ENCODE measurements at regions of chr21 and their contacts with region 1.

Region 1: GRCh38 chr21:39640754-39641153 is 28.0 kb downstream of the B3GALT5 start:
- DNase-seq: no peak
- ATAC-seq: no peak
- H3K4me3 ChIP-seq: no peak overlapping the region
- H3K27ac ChIP-seq: no peak overlapping the region
- H3K4me1 ChIP-seq: peaks cover 18% of the 10 kb centered on the region
- H3K27me3 ChIP-seq: no peaks in the 10 kb centered on the region
- CTCF ChIP-seq: no peak

Region 2: GRCh38 chr21:39451332-39452206 is 189.2 kb before region 1 on chr21 and contains the start of gene SH3BGR:
- CTCF ChIA-PET with region 1: no interaction called
- POLR2A ChIA-PET with region 1: no interaction called
- intact Hi-C with region 1: no loop called
- DNase-seq: peak; percentile 12
- ATAC-seq: peak; percentile 48
- H3K4me3 ChIP-seq: no peak within 1 kb of the TSS
- H3K27ac ChIP-seq: no peak within 1 kb of the TSS
- H3K4me1 ChIP-seq: no peaks in the 10 kb centered on the region
- H3K27me3 ChIP-seq: no peaks in the 10 kb centered on the region
- CTCF ChIP-seq: no peak
- total RNA-seq, gene SH3BGR: 0.40 and 1.3 TPM in 2 replicates

Region 3: GRCh38 chr21:39654857-39655350 is 14.2 kb after region 1 on chr21:
- CTCF ChIA-PET with region 1: no interaction called
- POLR2A ChIA-PET with region 1: no interaction called
- intact Hi-C with region 1: loop called (anchors 1 kb)
- DNase-seq: no peak
- ATAC-seq: no peak
- H3K4me3 ChIP-seq: no peak overlapping the region
- H3K27ac ChIP-seq: no peak overlapping the region
- H3K4me1 ChIP-seq: peaks cover under 1% of the 10 kb centered on the region; the same call in 1 of the 2 replicates
- H3K27me3 ChIP-seq: no peaks in the 10 kb centered on the region
- CTCF ChIP-seq: no peak